ENCODE measurements at regions of chr12 and their contacts with region 1.

Region 1: GRCh38 chr12:69359531-69360347 is at the start of gene YEATS4:
- DNase-seq: peak; percentile 87 to 88
- H3K4me3 ChIP-seq: peak within 1 kb of the TSS; percentile 63
- H3K27ac ChIP-seq: peak within 1 kb of the TSS; percentile 82
- H3K4me1 ChIP-seq: peaks cover 16% of the 10 kb centered on the region
- H3K27me3 ChIP-seq: no peaks in the 10 kb centered on the region
- CTCF ChIP-seq: no peak
- total RNA-seq, gene YEATS4: 23.5 and 30.5 TPM in 2 replicates

Region 2: DNA sequence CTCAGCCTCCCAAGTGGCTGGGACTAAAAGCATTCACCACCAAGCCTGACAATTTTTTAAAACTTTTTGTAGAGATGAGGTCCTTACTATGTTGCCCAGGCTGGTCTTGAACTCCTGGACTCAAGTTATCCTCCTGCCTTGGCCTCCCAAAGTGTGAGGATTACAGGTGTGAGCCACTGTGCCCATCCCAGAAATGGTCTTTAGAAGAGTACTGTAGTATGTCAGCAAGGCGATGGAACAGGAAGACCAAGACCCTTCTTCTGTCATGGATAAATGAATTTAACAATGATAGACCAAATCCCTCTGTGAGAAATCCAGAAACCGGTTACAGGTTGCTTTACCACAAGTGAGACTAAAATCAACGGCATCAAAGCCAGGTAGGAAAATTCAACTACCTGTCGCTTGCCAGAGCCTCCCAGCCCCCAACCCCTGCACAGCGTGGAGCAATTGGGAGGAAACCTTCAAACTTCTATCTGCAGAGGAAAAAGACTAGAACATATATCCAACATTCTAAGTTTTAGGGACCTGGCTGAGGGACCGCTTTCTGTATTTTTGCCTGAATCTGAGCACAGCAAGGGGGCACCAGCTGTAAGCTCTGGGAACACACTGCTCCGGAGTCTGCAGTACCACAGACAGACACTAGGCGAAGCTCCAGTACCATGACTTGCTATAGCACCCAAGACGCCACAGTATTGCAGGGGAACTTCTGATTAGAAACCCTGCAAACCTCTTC is 69.0 kb before region 1 on chr12:
- CTCF ChIA-PET with region 1: no interaction called
- POLR2A ChIA-PET with region 1: no interaction called
- intact Hi-C with region 1: loop called (anchors 2 kb)
- DNase-seq: peak; percentile 53 to 67
- H3K4me3 ChIP-seq: no peak overlapping the region
- H3K27ac ChIP-seq: no peak overlapping the region
- H3K4me1 ChIP-seq: no peaks in the 10 kb centered on the region
- H3K27me3 ChIP-seq: no peaks in the 10 kb centered on the region
- CTCF ChIP-seq: peak; percentile 91

Region 3: GRCh38 chr12:69321351-69321750 is 38.4 kb before region 1 on chr12:
- CTCF ChIA-PET with region 1: no interaction called
- POLR2A ChIA-PET with region 1: no interaction called
- intact Hi-C with region 1: no loop called
- DNase-seq: no peak
- H3K4me3 ChIP-seq: no peak overlapping the region
- H3K27ac ChIP-seq: no peak overlapping the region
- H3K4me1 ChIP-seq: no peaks in the 10 kb centered on the region
- H3K27me3 ChIP-seq: no peaks in the 10 kb centered on the region; the same call in 1 of the 2 replicates
- CTCF ChIP-seq: no peak

Region 4: GRCh38 chr12:69623970-69624369 is 264.2 kb after region 1 on chr12:
- CTCF ChIA-PET with region 1: interaction called, 16 read pairs
- POLR2A ChIA-PET with region 1: no interaction called
- intact Hi-C with region 1: no loop called
- DNase-seq: no peak
- H3K4me3 ChIP-seq: no peak overlapping the region
- H3K27ac ChIP-seq: no peak overlapping the region
- H3K4me1 ChIP-seq: no peaks in the 10 kb centered on the region
- H3K27me3 ChIP-seq: no peaks in the 10 kb centered on the region
- CTCF ChIP-seq: no peak

Region 5: DNA sequence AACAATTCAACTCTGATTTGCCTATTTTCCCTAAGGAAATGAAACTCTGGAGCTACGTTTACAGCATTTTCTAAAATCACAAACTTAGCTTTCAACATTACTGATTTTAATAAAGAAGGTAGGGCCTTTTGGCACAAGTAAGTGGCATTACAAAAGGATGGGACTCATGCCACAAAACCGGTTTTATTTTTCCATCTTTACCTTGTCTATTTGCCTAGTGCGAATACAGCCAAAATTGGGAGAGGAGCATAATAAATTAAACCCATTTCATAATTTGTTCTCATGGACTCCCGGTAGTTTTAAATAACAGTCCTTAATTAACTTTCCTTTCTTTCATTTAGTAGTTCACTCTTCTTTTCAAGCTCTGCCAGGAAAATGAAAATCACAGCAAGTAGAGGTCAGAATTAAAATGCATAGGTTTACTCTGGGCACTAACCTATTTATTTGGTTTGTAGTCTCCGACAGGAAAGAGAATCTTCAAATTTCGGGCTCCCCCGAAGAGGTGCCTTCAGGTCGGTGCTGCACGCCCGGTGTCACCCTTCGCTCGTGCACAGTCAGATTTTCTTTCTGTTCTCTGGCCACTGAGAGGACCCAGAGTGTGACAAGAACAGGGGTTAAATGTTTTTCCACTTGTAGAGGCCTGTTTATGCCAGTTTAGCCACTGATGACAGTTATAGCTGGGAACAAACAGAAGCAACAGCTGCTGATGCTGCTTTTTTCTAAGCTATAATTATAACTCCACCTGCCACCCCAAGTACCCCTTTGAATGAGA is 339.2 kb after region 1 on chr12 and contains the start of gene BEST3:
- CTCF ChIA-PET with region 1: interaction called, 10 read pairs
- POLR2A ChIA-PET with region 1: no interaction called
- intact Hi-C with region 1: no loop called
- DNase-seq: no peak
- H3K4me3 ChIP-seq: no peak within 1 kb of the TSS
- H3K27ac ChIP-seq: no peak within 1 kb of the TSS
- H3K4me1 ChIP-seq: no peaks in the 10 kb centered on the region
- H3K27me3 ChIP-seq: no peaks in the 10 kb centered on the region
- CTCF ChIP-seq: no peak
- total RNA-seq, gene BEST3: 0.17 TPM in 1 of 2 replicates, not detected in the other

Region 6: GRCh38 chr12:69966409-69967207 is 606.9 kb after region 1 on chr12:
- CTCF ChIA-PET with region 1: no interaction called
- POLR2A ChIA-PET with region 1: no interaction called
- intact Hi-C with region 1: no loop called
- DNase-seq: peak; percentile 49 to 57
- H3K4me3 ChIP-seq: no peak overlapping the region
- H3K27ac ChIP-seq: peak overlapping the region; percentile 81
- H3K4me1 ChIP-seq: peaks cover 20% of the 10 kb centered on the region
- H3K27me3 ChIP-seq: no peaks in the 10 kb centered on the region
- CTCF ChIP-seq: no peak